Adrenal gland (tissue), 19 donors: ENCODE measurements at regions of chrX and their contacts with region 1.

Region 1: GRCh38 chrX:154980330-154981096 is 42.0 kb downstream of the F8 start:
- DNase-seq: peak; percentile 65 to 92 (median 78)
- H3K4me3 ChIP-seq: peak overlapping the region in 2 of 4 donors; percentile 17 to 49
- H3K27ac ChIP-seq: no peak overlapping the region
- H3K4me1 ChIP-seq: no peaks in the 10 kb centered on the region
- H3K27me3 ChIP-seq: no peaks in the 10 kb centered on the region
- CTCF ChIP-seq: peak; percentile 27 to 81 (median 70)
- POLR2A ChIP-seq: no peak

Region 2: DNA sequence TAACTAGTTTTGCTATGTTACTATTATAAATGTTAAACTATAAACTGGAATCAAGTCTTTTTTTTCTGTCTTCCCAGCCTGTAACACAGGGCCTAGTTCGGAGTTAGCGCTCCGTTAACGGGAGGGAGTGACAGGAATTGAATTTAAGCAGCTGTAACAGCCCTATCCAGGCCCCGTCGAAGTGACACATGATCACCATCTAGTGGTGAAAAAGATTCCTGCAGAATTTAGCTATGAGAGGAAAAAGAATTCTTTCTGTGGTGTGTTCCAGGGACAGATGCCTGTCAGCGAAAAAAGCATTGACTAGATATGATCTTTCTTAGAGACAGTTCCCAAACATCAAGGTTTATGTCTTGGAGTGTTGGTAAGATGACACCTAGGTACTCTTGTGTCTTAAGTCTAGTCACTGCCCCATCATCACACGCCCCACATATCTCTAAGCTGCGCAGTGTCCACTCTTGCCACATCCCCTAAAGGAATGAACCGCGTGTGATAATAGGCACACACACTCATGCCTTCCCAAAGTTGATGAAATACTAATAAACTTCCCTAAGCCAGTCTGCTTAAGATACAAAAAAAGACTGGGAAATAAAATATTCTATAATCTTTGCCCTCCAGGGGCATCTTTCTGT is 231.7 kb before region 1 on chrX:
- intact Hi-C with region 1: no loop called
- DNase-seq: peak in 6 of 7 donors; percentile 25 to 57 (median 35)
- H3K4me3 ChIP-seq: no peak overlapping the region
- H3K27ac ChIP-seq: no peak overlapping the region
- H3K4me1 ChIP-seq: no peaks in the 10 kb centered on the region
- H3K27me3 ChIP-seq: no peaks in the 10 kb centered on the region
- CTCF ChIP-seq: peak; percentile 68 to 75 (median 72)
- POLR2A ChIP-seq: no peak

Region 3: GRCh38 chrX:155056877-155057792 is 76.6 kb after region 1 on chrX:
- intact Hi-C with region 1: loop called (anchors 5 to 10 kb)
- DNase-seq: peak; percentile 52 to 90 (median 71)
- H3K4me3 ChIP-seq: peak overlapping the region in 1 of 4 donors; percentile 31
- H3K27ac ChIP-seq: peak overlapping the region in 2 of 5 donors; percentile 27 to 40
- H3K4me1 ChIP-seq: no peaks in the 10 kb centered on the region
- H3K27me3 ChIP-seq: no peaks in the 10 kb centered on the region
- CTCF ChIP-seq: peak; percentile 70 to 78 (median 71)
- POLR2A ChIP-seq: no peak

Region 4: GRCh38 chrX:155112171-155112570 is 131.7 kb after region 1 on chrX:
- intact Hi-C with region 1: no loop called
- DNase-seq: no peak
- H3K4me3 ChIP-seq: no peak overlapping the region
- H3K27ac ChIP-seq: no peak overlapping the region
- H3K4me1 ChIP-seq: no peaks in the 10 kb centered on the region
- H3K27me3 ChIP-seq: no peaks in the 10 kb centered on the region
- CTCF ChIP-seq: no peak
- POLR2A ChIP-seq: no peak